ENCODE measurements at regions of chr14 and their contacts with region 1.

Region 1: GRCh38 chr14:99192028-99192621 is 79.9 kb downstream of the BCL11B start:
- DNase-seq: peak; percentile 49
- H3K4me3 Mint-ChIP-seq: peak overlapping the region; percentile 75
- H3K27ac Mint-ChIP-seq: peak overlapping the region; percentile 88
- H3K4me1 Mint-ChIP-seq: peaks cover 95% of the 10 kb centered on the region
- H3K27me3 Mint-ChIP-seq: no peaks in the 10 kb centered on the region

Region 2: DNA sequence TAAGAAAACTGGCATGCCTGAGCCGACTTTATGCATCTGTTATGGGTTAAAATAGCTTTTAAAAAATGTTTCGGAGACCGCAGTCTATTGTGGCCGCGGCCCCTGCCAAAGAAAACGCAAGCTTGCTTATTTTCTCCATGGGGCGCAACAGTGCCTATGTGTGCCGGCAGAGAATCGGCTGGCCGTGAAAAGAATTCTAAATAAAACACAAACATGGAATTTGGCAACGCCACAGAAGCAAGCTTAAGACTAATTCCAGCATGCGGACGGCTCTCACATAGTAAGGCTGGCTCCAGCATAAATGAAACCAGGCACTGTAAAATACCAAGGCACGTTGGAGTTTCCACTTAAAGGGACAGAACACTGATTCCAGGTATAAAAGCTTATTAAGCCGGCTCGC is 23.2 kb after region 1 on chr14:
- CTCF ChIA-PET with region 1: interaction called, 11 read pairs
- POLR2A ChIA-PET with region 1: interaction called, 9 read pairs
- DNase-seq: no peak
- H3K4me3 Mint-ChIP-seq: peak overlapping the region; percentile 62
- H3K27ac Mint-ChIP-seq: peak overlapping the region; percentile 63
- H3K4me1 Mint-ChIP-seq: peaks cover 93% of the 10 kb centered on the region
- H3K27me3 Mint-ChIP-seq: no peaks in the 10 kb centered on the region

Region 3: GRCh38 chr14:99230208-99231151 is 38.4 kb after region 1 on chr14:
- CTCF ChIA-PET with region 1: interaction called, 10 read pairs
- POLR2A ChIA-PET with region 1: interaction called, 21 read pairs
- DNase-seq: peak; percentile 93
- H3K4me3 Mint-ChIP-seq: peak overlapping the region; percentile 73
- H3K27ac Mint-ChIP-seq: peak overlapping the region; percentile 99
- H3K4me1 Mint-ChIP-seq: peaks cover 94% of the 10 kb centered on the region
- H3K27me3 Mint-ChIP-seq: no peaks in the 10 kb centered on the region

Region 4: DNA sequence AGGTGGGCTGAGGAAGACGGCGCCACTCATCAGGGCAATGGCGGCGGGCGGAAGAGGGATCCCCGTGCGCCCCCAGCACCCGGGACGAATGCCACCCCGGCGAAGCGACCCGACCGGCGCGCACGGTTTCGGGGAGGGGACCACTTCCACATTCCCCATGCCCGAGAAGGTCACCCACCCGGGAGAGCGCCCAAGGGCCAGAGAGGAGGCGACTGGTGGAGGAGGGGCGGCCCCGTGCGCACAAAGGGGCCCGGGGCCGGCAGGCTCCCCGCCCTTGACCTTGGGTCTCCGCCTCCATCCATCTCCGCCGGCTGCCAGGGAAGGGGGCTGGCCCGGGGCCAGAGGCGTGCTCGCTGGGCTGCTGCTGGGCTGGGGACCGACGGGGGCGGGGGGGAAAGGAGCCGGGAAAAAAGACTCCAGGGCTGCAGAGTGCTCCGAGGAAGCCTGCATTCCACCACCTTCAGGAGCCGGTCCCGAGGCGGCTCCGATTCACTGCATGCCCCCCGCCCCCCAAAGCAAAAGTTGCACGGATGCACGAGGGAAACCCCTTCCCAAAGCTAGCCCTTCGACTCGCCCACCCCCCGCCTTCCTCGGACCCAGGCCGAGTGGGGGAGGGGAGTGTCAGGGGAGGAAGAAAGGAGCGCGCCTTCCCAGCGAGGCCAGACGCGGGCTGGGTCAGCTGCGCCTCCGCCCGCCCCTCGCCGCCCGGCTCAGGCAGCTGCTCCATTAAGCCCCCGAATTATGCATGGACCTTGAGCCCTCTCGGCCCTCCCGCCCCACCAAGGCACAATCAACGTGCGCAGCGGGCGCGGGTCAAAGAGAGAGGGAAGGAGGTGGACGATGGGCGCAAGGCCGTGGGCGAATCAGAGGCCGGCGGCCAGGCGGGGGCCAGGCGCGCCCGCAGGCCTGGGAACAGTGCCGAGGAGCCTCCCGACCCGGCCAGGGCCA is 53.7 kb after region 1 on chr14:
- CTCF ChIA-PET with region 1: interaction called, 3 read pairs
- POLR2A ChIA-PET with region 1: interaction called, 16 read pairs
- DNase-seq: no peak
- H3K4me3 Mint-ChIP-seq: peak overlapping the region; percentile 79
- H3K27ac Mint-ChIP-seq: peak overlapping the region; percentile 99
- H3K4me1 Mint-ChIP-seq: peaks cover 79% of the 10 kb centered on the region
- H3K27me3 Mint-ChIP-seq: no peaks in the 10 kb centered on the region

Region 5: DNA sequence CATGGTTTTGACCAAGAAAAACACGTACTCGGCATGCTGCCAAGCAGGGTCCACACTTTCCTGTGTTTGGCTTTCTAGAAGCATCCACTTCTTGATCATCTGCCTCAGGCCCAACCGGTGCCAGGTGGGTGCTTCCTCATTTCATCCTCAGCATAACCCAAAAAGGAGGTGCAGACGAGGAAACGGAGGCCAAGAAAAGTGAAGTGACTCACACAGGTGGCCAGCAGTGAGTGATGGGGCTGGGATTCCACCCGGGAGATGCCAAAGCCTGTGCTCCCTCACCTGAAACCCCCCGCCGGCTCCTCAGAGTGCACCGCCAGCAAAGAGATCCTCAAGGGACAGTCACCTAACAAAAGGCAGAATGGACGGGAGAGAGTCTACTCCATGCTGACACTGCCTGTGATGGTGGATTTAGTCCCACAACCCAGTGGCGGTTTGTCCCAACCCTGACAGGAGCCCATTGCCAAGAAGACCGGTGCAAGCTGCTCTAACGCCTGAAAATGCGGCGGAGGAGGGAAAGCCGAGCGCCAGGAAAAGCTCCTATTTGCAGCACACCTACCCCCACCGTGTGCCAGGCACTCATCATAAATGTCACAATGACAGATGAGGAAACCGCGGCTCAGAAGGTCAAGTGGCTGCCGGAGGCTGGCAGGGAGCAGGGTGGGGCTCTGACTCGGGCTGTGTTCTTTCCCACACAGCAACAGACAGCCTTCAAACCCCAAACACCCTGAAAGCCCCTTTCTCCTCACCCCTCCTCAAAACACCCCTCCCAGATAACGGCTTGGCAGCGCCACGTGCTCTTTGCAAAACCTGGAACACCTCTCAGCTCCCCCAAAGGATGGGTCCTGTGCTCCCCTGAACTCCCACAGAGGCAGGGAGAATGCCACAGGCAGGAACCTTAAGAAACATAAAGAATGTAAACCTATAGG is 61.1 kb after region 1 on chr14:
- CTCF ChIA-PET with region 1: interaction called, 5 read pairs
- POLR2A ChIA-PET with region 1: interaction called, 10 read pairs
- DNase-seq: peak; percentile 70
- H3K4me3 Mint-ChIP-seq: peak overlapping the region; percentile 75
- H3K27ac Mint-ChIP-seq: peak overlapping the region; percentile 94
- H3K4me1 Mint-ChIP-seq: peaks cover 94% of the 10 kb centered on the region
- H3K27me3 Mint-ChIP-seq: no peaks in the 10 kb centered on the region

Region 6: DNA sequence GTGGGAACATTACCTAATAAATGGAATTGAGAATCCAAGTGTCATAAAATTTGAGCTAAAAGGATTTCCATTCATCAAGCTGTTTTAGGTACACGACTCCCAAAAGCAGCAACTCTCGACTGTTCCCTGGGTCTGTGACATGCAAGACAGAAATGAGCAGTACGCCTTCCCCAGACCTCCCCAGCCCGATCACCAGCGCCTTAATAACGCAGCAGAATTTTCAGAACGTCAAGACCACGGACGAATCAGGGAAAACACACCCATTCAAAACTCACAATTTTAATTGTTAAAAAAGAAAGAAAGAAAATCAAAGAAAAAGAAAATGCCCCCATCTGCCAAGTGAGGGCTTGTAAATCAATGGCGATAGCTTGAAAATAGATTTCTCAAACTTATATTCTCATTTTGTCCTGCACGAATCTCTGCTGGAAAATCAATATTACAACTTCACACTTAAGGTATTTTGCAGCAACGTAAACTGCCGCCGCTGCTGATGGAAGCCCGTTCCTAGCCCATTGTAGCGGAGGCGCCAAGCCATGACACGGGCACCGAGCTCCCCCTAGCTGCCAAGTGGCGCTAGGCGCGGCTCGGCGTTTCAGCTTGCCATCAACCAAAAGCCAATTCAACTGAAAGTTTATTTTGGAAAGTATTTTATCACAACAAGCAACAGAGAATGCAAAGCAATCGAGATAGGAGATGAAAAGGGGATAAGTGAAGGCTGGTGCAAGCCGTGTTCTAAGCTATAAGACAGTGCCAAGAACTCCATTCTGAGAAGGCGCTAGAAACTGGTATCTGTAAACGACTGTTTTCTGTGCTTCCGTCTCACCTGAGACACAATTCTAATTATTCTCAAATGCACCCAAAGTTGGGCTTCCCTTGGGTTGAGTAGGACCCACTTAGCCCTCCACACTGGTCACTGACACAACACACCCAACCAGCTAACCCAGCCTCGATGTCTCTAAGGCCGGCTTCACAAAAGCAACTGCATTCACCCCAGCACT is 74.4 kb after region 1 on chr14:
- CTCF ChIA-PET with region 1: interaction called, 80 read pairs
- POLR2A ChIA-PET with region 1: interaction called, 155 read pairs
- DNase-seq: peak; percentile 92
- H3K4me3 Mint-ChIP-seq: peak overlapping the region; percentile 99
- H3K27ac Mint-ChIP-seq: peak overlapping the region; percentile 100
- H3K4me1 Mint-ChIP-seq: peaks cover 59% of the 10 kb centered on the region
- H3K27me3 Mint-ChIP-seq: no peaks in the 10 kb centered on the region

Region 7: GRCh38 chr14:99318091-99318958 is 126.2 kb after region 1 on chr14:
- CTCF ChIA-PET with region 1: no interaction called
- POLR2A ChIA-PET with region 1: no interaction called
- DNase-seq: no peak
- H3K4me3 Mint-ChIP-seq: no peak overlapping the region
- H3K27ac Mint-ChIP-seq: no peak overlapping the region
- H3K4me1 Mint-ChIP-seq: peaks cover 14% of the 10 kb centered on the region
- H3K27me3 Mint-ChIP-seq: no peaks in the 10 kb centered on the region

Region 8: GRCh38 chr14:99441157-99441870 is 249.2 kb after region 1 on chr14:
- CTCF ChIA-PET with region 1: no interaction called
- POLR2A ChIA-PET with region 1: no interaction called
- DNase-seq: no peak
- H3K4me3 Mint-ChIP-seq: no peak overlapping the region
- H3K27ac Mint-ChIP-seq: peak overlapping the region; percentile 14
- H3K4me1 Mint-ChIP-seq: peaks cover 34% of the 10 kb centered on the region
- H3K27me3 Mint-ChIP-seq: no peaks in the 10 kb centered on the region